Activated naive CD4-positive, alpha-beta T cell treated with anti-CD3 and anti-CD28 coated beads, Interleukin-2, amount 10 ng/mL, durations not matched to agents 7 days and 5 days (primary cell): ENCODE measurements at regions of chr1 and their contacts with region 1.

Region 1: DNA sequence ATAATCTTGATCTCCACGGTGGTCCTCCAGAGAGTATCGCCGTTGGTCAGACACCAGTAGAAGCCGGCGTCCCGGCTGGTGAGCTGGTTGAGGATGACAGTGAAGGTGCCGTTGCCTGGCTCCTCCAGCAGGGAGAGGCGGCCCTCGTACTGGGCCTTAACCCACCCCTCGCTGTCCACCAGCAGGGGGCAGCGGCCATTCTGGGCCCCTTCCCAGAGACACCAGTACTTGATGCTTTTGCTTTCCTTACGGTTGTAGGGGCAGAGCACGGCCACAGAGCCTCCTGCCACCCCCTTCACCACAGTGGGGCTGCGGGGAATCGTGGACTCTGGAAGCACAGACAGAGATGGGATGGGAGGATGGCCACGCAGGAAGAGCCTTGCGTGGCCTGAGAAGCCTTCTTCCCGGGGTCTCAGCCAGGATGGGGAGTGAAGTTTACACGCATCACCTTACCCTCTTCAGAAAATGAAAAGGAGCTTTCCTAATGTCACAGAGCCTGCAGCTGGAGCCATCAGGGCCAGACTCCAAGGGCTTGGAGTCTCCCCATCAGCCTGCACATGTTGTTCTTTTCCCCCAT is 10.7 kb downstream of the PIGR start:
- DNase-seq: peak; percentile 74
- H3K4me3 Mint-ChIP-seq: no peak overlapping the region
- H3K27ac Mint-ChIP-seq: no peak overlapping the region
- H3K4me1 Mint-ChIP-seq: peaks cover 14% of the 10 kb centered on the region
- H3K27me3 Mint-ChIP-seq: peaks cover 35% of the 10 kb centered on the region

Region 2: GRCh38 chr1:206971029-206971655 is 35.6 kb after region 1 on chr1:
- CTCF ChIA-PET with region 1: interaction called, 265 read pairs
- DNase-seq: no peak
- H3K4me3 Mint-ChIP-seq: no peak overlapping the region
- H3K27ac Mint-ChIP-seq: no peak overlapping the region
- H3K4me1 Mint-ChIP-seq: peaks cover 27% of the 10 kb centered on the region
- H3K27me3 Mint-ChIP-seq: peaks cover 37% of the 10 kb centered on the region